ENCODE measurements at regions of chr3 and their contacts with region 1.

Region 1: DNA sequence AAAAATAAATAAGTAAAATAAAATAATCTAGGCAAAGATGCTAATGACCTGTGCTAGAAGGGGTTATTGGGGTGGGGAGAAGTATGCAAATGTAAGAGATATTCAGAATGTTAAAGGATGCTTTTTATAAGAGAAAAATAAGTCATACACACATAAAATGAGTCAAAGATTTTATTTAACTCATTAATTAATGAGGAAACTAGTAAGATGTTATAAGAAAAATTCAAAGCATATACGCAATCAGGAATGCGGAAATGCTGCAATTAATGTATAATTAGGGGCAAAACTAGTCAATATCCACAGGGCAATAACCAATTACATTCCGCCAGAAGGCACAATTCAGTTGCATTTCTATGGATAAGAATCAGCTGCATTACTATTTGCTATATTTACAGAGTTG is 30.1 kb downstream of the MAP3K13 start:
- DNase-seq: no peak
- ATAC-seq: no peak
- H3K4me3 ChIP-seq: no peak overlapping the region
- H3K27ac ChIP-seq: no peak overlapping the region
- H3K4me1 ChIP-seq: no peaks in the 10 kb centered on the region
- H3K27me3 ChIP-seq: no peaks in the 10 kb centered on the region
- CTCF ChIP-seq: no peak

Region 2: GRCh38 chr3:185199671-185200070 is 193.4 kb before region 1 on chr3:
- intact Hi-C with region 1: loop called in 1 of 10 experiments (anchors 5 kb)
- DNase-seq: no peak
- ATAC-seq: no peak
- H3K4me3 ChIP-seq: no peak overlapping the region
- H3K27ac ChIP-seq: no peak overlapping the region
- H3K4me1 ChIP-seq: no peaks in the 10 kb centered on the region
- H3K27me3 ChIP-seq: no peaks in the 10 kb centered on the region
- CTCF ChIP-seq: no peak